Ascending aorta (tissue), 2 donors: ENCODE measurements at regions of chr2 and their contacts with region 1.

Region 1: DNA sequence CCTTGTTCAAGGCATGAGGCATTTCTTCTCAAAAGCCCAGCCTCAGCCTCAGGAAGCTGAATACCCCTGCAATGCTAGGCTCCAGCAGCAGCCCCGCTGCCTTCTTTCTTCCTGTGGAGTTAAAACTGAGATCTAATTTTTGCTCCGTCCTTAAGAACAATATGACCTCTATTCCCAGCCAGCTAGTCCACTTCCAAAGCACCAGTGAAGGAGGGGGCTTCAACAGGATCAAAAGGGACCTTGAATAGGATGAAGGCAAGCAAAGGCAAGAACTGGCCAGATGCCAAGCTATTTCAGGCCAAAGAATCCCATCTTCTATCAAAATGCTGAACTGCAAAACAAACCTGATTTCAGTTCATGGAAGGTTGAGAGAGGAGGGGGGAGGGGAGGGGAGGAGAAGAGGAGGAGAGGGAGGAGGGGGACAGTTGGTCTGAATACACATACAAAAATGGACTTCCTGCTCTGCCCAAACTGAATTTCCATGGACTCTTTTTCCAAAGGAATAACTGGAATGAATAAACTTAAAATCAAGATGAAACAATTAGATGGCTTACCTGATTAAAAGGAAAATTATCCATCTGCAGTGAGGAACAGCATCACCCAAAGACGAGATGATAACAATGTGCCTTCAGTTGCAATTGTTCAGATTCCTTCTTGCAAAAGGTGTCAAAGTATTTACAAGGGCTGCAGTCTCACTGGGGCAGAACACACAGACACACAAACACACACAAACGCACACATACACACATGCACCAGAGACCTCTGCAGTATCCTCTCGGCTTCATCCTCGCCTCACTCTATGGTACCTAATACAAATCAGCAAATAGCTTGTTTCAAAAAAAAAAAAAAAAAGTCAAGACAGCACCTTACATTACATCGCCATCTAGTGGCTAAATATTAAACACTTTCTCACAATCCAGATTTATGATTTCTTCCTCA is at the start of gene SCN1A:
- DNase-seq: no peak
- H3K4me3 ChIP-seq: no peak within 1 kb of the TSS
- H3K27ac ChIP-seq: no peak within 1 kb of the TSS
- H3K4me1 ChIP-seq: no peaks in the 10 kb centered on the region
- H3K27me3 ChIP-seq: no peaks in the 10 kb centered on the region
- CTCF ChIP-seq: peak in 2 of 3 experiments; percentile 47 to 63
- total RNA-seq, gene SCN1A: not detected

Region 2: GRCh38 chr2:165529130-165529529 is 598.4 kb before region 1 on chr2:
- intact Hi-C with region 1: no loop called
- DNase-seq: no peak
- H3K4me3 ChIP-seq: no peak overlapping the region
- H3K27ac ChIP-seq: no peak overlapping the region
- H3K4me1 ChIP-seq: no peaks in the 10 kb centered on the region
- H3K27me3 ChIP-seq: no peaks in the 10 kb centered on the region
- CTCF ChIP-seq: no peak

Region 3: DNA sequence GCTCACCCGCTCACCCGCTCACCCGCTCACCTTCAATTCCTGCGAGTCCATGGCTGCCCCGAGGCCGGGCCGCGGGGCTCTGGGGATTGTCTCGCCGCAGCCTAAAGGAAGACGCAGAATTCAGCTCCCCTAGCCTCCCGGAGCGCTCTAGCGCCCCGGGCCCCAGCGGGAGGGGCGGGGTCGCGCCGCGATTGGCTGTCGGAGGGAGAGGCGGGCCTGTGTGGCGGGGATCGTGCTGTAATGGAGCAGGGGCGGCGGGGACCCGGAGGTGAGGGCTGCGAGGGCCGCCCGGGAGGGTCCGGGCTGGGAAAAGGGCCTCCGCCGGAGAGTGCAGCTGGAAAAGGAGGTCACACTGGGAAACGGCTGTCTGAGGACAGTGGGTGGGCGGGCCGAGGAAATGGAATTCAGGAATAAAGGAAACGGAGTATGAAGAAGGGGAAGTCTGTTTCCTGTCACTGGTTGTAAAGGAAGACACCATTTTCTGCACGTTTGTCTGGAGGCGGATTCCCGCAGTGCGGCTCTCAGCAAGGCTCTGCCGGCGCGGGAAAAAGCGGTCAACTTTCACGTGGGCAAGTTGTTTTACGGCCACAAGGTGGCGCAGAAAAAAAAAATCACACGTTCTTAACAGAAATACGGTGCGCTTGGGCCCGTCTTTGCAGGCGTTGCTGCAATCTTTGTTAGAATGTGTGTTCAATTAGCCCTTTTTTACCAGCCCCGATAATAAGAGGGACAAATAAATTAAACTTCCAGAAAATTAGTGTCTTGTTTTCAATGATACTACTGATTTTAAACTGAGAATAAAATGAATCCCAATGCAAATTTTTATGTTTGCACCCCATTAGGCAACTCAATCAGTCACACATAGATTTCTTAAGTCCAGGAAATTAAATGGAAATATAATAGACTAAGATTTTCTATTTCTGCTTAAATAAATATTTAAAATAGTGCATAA is 173.6 kb before region 1 on chr2 and contains the start of gene TTC21B:
- intact Hi-C with region 1: loop called (anchors 1 kb)
- DNase-seq: peak; percentile 76 to 97
- H3K4me3 ChIP-seq: peak within 1 kb of the TSS; percentile 77 to 95
- H3K27ac ChIP-seq: peak within 1 kb of the TSS; percentile 79 to 82
- H3K4me1 ChIP-seq: peaks cover 0 to 16% of the 10 kb centered on the region in 2 donors
- H3K27me3 ChIP-seq: no peaks in the 10 kb centered on the region
- CTCF ChIP-seq: peak; percentile 67 to 83 (median 78)
- total RNA-seq, gene TTC21B: 5.5 TPM

Region 4: DNA sequence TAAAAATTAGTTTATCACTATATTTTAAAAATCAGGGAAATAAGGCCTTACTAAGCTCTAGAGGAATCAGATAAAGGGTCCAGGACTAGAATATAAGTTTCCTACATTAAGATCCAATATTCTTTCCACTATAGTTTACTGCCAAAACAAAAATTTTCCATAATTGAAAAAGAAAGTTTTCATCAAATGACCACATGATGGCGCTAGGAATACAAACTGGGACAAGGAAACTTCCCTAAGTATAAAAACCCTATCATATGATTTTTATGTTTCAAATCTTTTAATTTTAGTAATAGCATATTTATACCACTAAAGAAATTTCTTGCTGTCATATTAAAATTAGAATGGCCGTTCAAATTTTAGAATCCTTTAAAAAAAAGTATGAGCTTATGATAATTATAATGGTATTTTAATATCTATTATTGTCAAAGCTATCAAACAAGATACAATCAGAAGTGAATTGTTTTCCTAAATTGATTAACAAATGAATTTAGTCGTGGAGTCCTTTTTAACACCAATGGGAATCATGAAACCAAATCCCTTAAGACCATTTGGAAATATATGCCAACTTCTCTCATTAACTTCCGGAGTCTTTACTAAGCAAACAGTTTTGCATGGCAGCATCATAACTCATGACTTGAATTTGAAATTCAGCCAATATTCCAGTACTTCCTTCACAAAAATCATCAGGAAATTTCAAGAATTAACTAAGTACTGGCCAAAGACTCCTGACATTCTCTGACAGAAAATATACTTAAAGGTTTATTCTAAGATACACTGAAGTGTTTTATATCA is 69.9 kb before region 1 on chr2:
- intact Hi-C with region 1: loop called (anchors 1 kb)
- DNase-seq: no peak
- H3K4me3 ChIP-seq: no peak overlapping the region
- H3K27ac ChIP-seq: no peak overlapping the region
- H3K4me1 ChIP-seq: peaks cover 0 to 8% of the 10 kb centered on the region in 2 donors
- H3K27me3 ChIP-seq: no peaks in the 10 kb centered on the region
- CTCF ChIP-seq: peak in 2 of 3 experiments; percentile 45 to 46